A549 (cell line): ENCODE measurements at regions of chr5 and their contacts with region 1.

Region 1: DNA sequence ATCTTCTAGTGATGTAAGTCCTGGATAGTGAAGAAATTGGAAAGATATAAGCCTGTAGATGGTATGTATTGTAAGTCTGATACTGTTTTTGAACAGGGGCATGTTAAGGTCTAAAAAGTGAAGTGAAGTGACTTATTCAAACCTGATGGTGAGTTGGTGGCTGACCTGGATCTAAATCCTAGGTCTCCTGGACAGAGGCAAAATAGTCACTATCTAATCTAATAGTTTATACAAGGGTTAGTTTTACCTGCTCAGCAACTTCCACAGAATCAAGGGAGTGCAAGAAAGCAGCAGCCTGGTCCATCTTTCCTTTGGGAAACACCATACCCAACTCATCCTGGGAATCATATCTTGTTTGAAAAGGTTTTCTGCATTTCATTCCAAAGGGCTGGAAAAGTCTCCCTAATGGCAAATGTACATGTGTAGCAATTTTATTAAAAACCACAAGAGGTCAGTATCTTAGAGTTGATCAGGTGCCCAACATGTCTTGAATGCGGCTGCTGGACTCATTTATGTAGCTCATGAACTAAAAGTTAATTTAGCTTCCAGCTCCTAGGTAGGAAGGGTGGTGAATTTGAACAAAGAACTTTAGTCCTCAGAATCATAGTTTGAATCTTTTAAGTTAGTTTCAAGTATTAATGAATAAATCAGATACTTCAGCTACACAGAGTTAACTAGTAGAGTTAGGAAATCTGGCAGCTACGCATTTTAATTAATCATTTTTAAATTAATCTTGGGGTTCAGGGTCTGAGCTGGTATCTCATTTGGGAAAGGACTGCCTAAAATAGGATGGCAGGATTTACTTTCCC is 26.0 kb downstream of the SKP2 start:
- DNase-seq: peak; percentile 13 to 56
- ATAC-seq: peak; percentile 88 to 90
- H3K4me3 ChIP-seq: no peak overlapping the region
- H3K27ac ChIP-seq: no peak overlapping the region
- H3K4me1 ChIP-seq: no peaks in the 10 kb centered on the region
- CTCF ChIP-seq: peak; percentile 65
- EP300 ChIP-seq: no peak
- POLR2A ChIP-seq: no peak
- RAD21 ChIP-seq: peak; percentile 30 to 50

Region 2: GRCh38 chr5:36151434-36152323 is 26.2 kb before region 1 on chr5 and contains the starts of genes LMBRD2 and SKP2:
- CTCF ChIA-PET with region 1: interaction called, 10 read pairs
- POLR2A ChIA-PET with region 1: no interaction called
- DNase-seq: peak; percentile 95
- ATAC-seq: peak; percentile 98 to 99
- H3K4me3 ChIP-seq: peak within 1 kb of the TSS; percentile 78
- H3K27ac ChIP-seq: peak within 1 kb of the TSS; percentile 79 to 89
- H3K4me1 ChIP-seq: peaks cover 7% of the 10 kb centered on the region; the same call in 1 of the 3 replicates
- CTCF ChIP-seq: no peak
- EP300 ChIP-seq: no peak
- POLR2A ChIP-seq: peak; percentile 82
- RAD21 ChIP-seq: no peak
- polyA plus RNA-seq, gene LMBRD2: 5.4 and 6.8 TPM in 2 replicates
- polyA plus RNA-seq, gene SKP2: 13.7 and 23.4 TPM in 2 replicates

Region 3: DNA sequence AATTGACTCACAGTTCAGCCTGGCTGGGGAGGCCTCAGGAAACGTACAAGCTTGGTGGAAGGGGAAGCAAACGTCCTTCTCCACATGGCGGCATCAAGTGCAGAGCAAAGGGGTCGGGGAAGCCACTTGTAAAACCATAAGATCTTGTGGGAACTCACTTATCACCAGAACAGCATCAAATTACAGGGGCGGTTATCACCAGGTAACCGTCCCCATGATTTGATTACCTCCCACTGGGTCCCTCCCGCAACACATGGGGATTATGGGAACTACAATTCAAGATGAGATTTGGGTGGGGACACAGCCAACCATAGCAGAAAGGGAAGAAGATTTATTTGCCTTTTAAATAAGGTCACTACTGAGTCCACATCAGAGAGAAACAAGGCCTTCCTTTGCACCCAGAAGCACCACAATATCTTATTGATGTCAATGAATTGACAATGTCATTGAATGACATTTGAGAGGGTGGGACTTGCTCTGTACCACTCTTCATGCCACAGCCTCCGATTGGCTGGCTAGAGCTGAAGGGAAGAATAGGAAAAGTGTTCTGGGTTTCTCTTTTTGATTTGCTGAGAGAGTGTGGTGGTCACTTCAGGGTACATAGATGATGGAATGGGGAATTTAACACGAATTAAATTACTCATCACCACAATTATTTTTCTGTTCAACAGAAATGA is 15.0 kb before region 1 on chr5:
- CTCF ChIA-PET with region 1: interaction called, 19 read pairs
- POLR2A ChIA-PET with region 1: no interaction called
- DNase-seq: no peak
- ATAC-seq: no peak
- H3K4me3 ChIP-seq: no peak overlapping the region
- H3K27ac ChIP-seq: no peak overlapping the region
- H3K4me1 ChIP-seq: no peaks in the 10 kb centered on the region
- CTCF ChIP-seq: no peak
- EP300 ChIP-seq: no peak
- POLR2A ChIP-seq: no peak
- RAD21 ChIP-seq: no peak

Region 4: GRCh38 chr5:36193746-36194145 is 15.8 kb after region 1 on chr5:
- CTCF ChIA-PET with region 1: no interaction called
- POLR2A ChIA-PET with region 1: no interaction called
- DNase-seq: no peak
- ATAC-seq: no peak
- H3K4me3 ChIP-seq: no peak overlapping the region
- H3K27ac ChIP-seq: no peak overlapping the region
- H3K4me1 ChIP-seq: no peaks in the 10 kb centered on the region
- CTCF ChIP-seq: no peak
- EP300 ChIP-seq: no peak
- POLR2A ChIP-seq: no peak
- RAD21 ChIP-seq: no peak

Region 5: GRCh38 chr5:36305571-36306326 is 127.8 kb after region 1 on chr5:
- CTCF ChIA-PET with region 1: interaction called, 15 read pairs
- POLR2A ChIA-PET with region 1: no interaction called
- DNase-seq: peak in 1 of 2 experiments; percentile 36
- ATAC-seq: peak; percentile 80 to 84; a peak in 5 of 6 replicates
- H3K4me3 ChIP-seq: no peak overlapping the region
- H3K27ac ChIP-seq: no peak overlapping the region
- H3K4me1 ChIP-seq: no peaks in the 10 kb centered on the region
- CTCF ChIP-seq: peak; percentile 72
- EP300 ChIP-seq: no peak
- POLR2A ChIP-seq: no peak
- RAD21 ChIP-seq: peak; percentile 71 to 73